ENCODE measurements at regions of chr14 and their contacts with region 1.

Region 1: DNA sequence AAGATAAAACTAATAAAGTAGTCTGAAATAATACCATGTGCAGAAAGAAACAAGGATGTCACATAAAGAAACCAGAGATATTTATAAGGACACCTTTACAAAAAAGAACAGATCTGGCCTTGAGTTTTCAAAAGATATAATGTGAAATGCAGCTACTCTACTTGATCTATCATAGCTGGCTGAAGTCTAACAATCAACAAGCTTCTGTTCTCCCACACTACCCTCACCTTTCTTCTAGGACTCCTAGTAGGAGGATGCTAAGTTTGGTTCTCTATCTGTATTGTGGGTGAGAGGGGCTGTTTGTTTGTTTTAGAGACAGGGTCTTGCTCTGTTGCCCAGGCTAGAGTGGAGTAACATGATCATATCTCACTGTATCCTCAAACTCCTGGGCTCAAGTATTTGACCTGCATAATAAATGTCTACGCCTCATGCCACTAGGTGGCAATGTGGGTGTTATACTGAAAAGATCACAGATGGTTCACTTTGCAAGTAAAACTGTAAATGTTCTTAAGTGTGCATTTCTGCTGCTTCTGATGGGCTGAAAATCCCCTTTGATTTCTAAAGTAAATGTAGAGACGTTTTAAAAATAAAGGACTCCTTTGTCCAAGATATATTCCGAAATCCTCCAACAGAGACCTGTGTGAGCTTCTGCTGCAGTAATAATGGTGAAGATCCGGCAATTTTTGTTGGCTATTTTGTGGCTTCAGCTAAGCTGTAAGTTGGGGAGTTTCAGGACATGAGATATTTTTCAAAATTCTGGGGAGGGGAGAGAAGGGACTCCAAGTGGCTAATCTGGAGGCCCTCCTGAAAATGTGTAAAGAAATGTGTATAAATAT is 269.3 kb downstream of the DAD1 start:
- DNase-seq: peak; percentile 68
- H3K4me3 ChIP-seq: no peak overlapping the region
- H3K27ac ChIP-seq: no peak overlapping the region
- H3K4me1 ChIP-seq: no peaks in the 10 kb centered on the region
- H3K27me3 ChIP-seq: peaks cover 41% of the 10 kb centered on the region

Region 2: DNA sequence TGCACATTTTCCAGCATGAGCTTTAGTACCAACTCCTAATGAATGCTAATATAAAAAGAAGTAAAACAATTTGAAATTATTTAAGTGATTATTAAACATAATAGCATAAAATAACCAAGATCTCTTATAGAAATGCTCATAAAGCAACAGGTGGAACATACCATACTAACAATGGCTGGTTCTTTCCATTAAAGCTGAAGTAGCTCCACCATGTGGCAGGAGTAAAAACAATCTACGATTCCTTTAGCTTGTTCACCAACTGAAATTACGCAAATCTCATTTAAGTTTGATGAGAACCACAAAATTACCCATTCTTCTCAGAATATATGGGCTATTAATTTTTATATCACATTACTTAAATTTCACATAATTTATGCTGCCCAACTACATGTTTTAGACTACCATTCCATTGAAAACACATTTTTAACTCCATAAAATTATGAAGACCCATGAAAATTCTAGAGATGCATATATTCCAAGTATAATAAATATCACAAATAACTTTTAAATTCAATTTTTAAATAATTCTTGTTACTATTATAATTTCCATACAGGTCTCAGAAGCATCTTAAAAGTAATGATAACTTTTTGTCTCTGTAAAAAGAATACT is 55.7 kb after region 1 on chr14:
- in situ Hi-C with region 1: loop called (anchors 10 kb)
- DNase-seq: peak; percentile 68
- H3K4me3 ChIP-seq: no peak overlapping the region
- H3K27ac ChIP-seq: no peak overlapping the region
- H3K4me1 ChIP-seq: peaks cover 14% of the 10 kb centered on the region
- H3K27me3 ChIP-seq: peaks cover 33% of the 10 kb centered on the region

Measured in GM23248 (cell line).